ENCODE measurements at regions of chr1 and their contacts with region 1.

Region 1: GRCh38 chr1:84143796-84144565 is at the start of gene PRKACB:
- DNase-seq: peak; percentile 21
- H3K4me3 Mint-ChIP-seq: peak within 1 kb of the TSS; percentile 89
- H3K27ac Mint-ChIP-seq: peak within 1 kb of the TSS; percentile 98
- H3K4me1 Mint-ChIP-seq: peaks cover 35% of the 10 kb centered on the region
- H3K27me3 Mint-ChIP-seq: no peaks in the 10 kb centered on the region
- total RNA-seq, gene PRKACB: 25.7 to 25.9 TPM

Region 2: GRCh38 chr1:83508485-83509151 is 635.4 kb before region 1 on chr1:
- CTCF ChIA-PET with region 1: no interaction called
- intact Hi-C with region 1: loop called (anchors 10 kb)
- DNase-seq: peak; percentile 68
- H3K4me3 Mint-ChIP-seq: peak overlapping the region; percentile 46
- H3K27ac Mint-ChIP-seq: peak overlapping the region; percentile 91
- H3K4me1 Mint-ChIP-seq: peaks cover 46% of the 10 kb centered on the region
- H3K27me3 Mint-ChIP-seq: no peaks in the 10 kb centered on the region

Region 3: DNA sequence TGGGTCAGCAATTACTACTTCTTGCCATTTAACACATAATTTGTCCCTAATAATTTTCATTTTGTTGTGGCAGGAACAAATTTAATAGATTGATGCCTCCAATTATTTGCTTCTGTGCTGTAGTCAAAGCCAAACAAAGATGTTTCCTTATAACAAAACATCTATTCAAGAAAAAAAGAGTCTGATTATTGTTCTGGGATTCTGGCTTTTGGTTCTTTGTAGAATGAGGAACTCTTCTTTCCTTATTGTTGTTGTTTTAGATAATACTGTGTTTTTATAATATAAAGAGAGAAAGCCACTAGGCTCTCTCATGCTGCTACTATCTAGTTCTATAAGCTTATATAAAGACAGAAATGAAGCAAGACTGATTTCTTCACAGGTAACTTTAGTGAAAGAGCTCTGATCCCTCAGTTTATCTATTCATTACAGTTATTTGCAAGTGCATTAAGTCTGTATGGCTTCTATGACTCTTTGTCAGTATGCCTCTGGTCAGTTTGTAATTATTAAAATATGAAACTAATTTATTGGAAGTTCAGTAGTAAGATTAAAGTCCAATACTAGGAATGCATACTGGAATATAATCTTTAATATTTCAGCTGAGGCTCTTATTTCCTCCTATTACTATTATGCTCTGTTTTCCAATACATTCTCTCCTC is 37.5 kb after region 1 on chr1:
- CTCF ChIA-PET with region 1: interaction called, 3 read pairs
- intact Hi-C with region 1: loop called (anchors 1 kb)
- DNase-seq: no peak
- H3K4me3 Mint-ChIP-seq: no peak overlapping the region
- H3K27ac Mint-ChIP-seq: no peak overlapping the region
- H3K4me1 Mint-ChIP-seq: peaks cover 15% of the 10 kb centered on the region
- H3K27me3 Mint-ChIP-seq: no peaks in the 10 kb centered on the region

Region 4: DNA sequence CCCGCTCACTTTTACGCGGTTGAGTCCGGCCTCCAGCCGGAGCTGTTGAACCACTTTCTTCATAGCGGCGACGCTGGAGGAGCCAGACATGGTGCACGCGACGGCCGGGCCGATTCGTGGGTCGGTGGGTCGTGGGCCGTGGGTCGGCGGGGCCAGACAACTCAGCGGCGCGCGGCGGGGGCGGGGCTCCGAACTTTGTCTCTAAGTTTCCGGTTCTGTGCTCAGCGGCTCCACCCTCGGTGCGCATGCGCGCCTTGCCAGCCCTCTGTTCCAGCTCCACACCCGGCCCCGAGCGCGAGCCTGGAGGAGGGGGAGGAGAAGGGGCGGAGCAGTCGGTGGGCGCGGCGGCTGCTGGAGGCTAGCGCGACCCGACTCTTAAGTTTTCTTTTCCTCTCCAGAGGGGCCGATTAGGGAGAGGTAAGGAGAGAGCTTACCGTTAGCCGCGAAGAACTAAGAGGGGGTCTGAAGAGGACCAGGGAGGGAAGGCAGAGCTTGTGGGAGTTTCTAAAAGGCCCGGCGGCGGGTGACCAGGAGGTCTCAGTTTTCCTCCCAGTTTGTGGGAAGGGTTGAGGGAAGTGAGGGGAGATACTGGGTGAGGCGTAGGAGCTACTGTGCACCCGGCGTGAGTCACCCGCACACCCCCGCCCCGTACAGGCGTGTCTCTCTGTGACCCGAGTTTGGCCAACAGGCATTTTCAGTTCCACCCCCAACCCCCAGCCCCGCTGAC is 362.2 kb after region 1 on chr1 and contains the starts of genes GNG5 and SPATA1:
- CTCF ChIA-PET with region 1: interaction called, 3 read pairs
- intact Hi-C with region 1: loop called (anchors 1 kb)
- DNase-seq: peak; percentile 97
- H3K4me3 Mint-ChIP-seq: peak within 1 kb of the TSS; percentile 100
- H3K27ac Mint-ChIP-seq: peak within 1 kb of the TSS; percentile 98
- H3K4me1 Mint-ChIP-seq: peaks cover 27% of the 10 kb centered on the region
- H3K27me3 Mint-ChIP-seq: no peaks in the 10 kb centered on the region
- total RNA-seq, gene GNG5: 128 to 132 TPM
- total RNA-seq, gene SPATA1: 1.8 to 2.7 TPM

Region 5: GRCh38 chr1:84753516-84754385 is 609.8 kb after region 1 on chr1:
- CTCF ChIA-PET with region 1: interaction called, 7 read pairs
- intact Hi-C with region 1: loop called (anchors 1 kb)
- DNase-seq: peak; percentile 86
- H3K4me3 Mint-ChIP-seq: no peak overlapping the region
- H3K27ac Mint-ChIP-seq: no peak overlapping the region
- H3K4me1 Mint-ChIP-seq: peaks cover 6% of the 10 kb centered on the region
- H3K27me3 Mint-ChIP-seq: peaks cover 6% of the 10 kb centered on the region

Region 6: GRCh38 chr1:84936116-84936810 is 792.3 kb after region 1 on chr1:
- CTCF ChIA-PET with region 1: interaction called, 3 read pairs
- intact Hi-C with region 1: loop called (anchors 2 kb)
- DNase-seq: peak; percentile 43
- H3K4me3 Mint-ChIP-seq: no peak overlapping the region
- H3K27ac Mint-ChIP-seq: no peak overlapping the region
- H3K4me1 Mint-ChIP-seq: peaks cover 4% of the 10 kb centered on the region
- H3K27me3 Mint-ChIP-seq: no peaks in the 10 kb centered on the region